Heart right ventricle (tissue), 16 donors: ENCODE measurements at regions of chr4 and their contacts with region 1.

Region 1: DNA sequence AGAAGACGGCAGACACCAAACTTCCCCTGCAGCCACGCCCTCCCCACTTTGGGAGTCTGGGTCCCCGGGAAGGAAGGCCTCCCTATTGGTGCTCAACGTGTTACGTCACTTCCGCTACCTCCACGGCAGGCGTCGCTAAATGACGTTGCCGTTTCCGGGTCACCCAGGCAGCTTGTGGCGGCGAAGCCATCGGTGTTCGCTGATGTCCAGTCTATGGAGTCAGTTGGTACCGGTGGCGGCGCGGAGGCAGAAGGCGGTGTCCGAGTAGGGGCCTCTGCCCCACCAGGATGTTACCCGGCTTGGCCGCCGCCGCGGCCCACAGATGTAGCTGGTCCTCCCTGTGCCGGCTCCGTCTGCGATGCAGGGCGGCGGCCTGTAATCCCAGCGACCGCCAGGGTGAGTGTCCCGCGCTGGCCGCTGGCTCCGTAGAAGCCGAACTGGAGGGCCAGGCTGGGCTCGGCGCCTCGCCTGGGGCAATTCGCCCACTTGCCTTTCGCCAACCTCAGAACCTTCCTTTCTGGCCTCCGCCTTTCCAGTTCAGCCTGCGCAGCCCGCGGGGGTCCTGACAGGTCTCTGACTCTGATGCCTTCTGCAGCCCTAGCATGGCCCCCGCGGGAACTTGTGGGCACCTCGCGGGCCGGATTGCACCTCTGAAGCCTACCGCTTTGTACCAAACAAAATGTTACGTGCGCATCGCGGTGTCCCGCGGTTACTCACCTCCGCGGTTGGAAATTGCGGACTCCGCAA is at the start of gene SLC30A9:
- DNase-seq: peak; percentile 91 to 97
- ATAC-seq: peak; percentile 98 to 100 (median 99)
- H3K4me3 ChIP-seq: peak within 1 kb of the TSS; percentile 72 to 97 (median 91)
- H3K27ac ChIP-seq: peak within 1 kb of the TSS; percentile 67 to 94 (median 89)
- H3K4me1 ChIP-seq: peaks cover 0 to 54% (median 34%) of the 10 kb centered on the region in 9 donors
- H3K27me3 ChIP-seq: no peaks in the 10 kb centered on the region
- CTCF ChIP-seq: peak; percentile 12 to 61 (median 41)
- total RNA-seq, gene SLC30A9: 73.8 to 95.0 (median 82.2) TPM

Region 2: DNA sequence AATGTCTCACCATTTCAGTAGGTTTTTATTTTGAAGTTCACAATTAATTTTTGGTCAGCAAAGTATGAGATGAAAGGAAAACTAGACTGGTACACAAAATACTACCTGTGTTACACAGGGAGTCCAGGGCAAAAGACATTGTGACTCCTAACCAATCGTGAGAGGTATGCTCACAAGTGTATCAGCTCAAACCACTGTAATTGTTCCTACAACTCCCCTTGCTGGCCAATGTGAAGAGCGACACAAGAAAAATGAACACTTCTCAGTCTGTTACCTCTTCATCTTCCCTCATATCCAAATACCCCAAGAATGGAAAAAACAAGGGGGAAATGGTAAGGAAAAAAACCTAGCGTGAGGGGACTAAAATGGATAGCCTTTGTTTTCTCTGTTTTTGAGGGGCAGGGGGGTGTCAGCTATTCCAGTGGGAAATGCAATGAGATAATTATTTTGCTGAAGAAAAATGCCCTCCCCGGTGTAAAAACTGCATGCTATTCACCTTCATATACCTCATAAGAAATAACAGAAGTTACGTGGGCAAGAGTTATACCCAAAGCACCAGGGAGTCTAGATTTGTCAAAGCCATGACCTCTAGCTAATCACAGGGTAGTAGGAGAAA is 1271.4 kb before region 1 on chr4:
- intact Hi-C with region 1: loop called in 1 of 10 experiments (anchors 5 kb)
- DNase-seq: no peak
- ATAC-seq: peak in 1 of 8 donors; percentile 49
- H3K4me3 ChIP-seq: no peak overlapping the region
- H3K27ac ChIP-seq: no peak overlapping the region
- H3K4me1 ChIP-seq: peaks cover 0 to 40% (median 0%) of the 10 kb centered on the region in 9 donors
- H3K27me3 ChIP-seq: peaks cover 0 to 37% (median 2%) of the 10 kb centered on the region in 7 donors
- CTCF ChIP-seq: peak in 5 of 9 donors; percentile 26 to 49 (median 33)

Region 3: DNA sequence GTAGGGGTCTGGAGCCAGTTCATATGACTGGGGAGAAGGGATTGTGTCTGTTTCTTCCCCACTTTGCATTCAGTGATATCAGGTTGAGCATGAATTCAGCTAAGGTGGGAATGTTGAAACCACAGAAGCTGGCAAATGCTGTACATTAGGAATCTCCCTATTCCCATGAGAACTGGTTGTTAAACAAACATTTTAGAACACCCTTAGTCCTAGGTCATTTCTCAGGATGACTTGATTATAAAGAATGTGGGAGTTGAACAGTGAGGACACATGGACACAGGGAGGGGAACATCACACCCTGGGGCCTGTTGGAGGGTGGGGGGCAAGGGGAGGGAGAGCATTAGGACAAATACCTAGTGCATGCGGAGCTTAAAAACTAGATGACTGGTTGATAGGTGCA is 515.1 kb before region 1 on chr4:
- intact Hi-C with region 1: no loop called
- DNase-seq: no peak
- ATAC-seq: peak in 2 of 8 donors; percentile 6 to 37
- H3K4me3 ChIP-seq: no peak overlapping the region
- H3K27ac ChIP-seq: no peak overlapping the region
- H3K4me1 ChIP-seq: peaks cover 0 to 46% (median 16%) of the 10 kb centered on the region in 9 donors
- H3K27me3 ChIP-seq: no peaks in the 10 kb centered on the region
- CTCF ChIP-seq: no peak

Region 4: DNA sequence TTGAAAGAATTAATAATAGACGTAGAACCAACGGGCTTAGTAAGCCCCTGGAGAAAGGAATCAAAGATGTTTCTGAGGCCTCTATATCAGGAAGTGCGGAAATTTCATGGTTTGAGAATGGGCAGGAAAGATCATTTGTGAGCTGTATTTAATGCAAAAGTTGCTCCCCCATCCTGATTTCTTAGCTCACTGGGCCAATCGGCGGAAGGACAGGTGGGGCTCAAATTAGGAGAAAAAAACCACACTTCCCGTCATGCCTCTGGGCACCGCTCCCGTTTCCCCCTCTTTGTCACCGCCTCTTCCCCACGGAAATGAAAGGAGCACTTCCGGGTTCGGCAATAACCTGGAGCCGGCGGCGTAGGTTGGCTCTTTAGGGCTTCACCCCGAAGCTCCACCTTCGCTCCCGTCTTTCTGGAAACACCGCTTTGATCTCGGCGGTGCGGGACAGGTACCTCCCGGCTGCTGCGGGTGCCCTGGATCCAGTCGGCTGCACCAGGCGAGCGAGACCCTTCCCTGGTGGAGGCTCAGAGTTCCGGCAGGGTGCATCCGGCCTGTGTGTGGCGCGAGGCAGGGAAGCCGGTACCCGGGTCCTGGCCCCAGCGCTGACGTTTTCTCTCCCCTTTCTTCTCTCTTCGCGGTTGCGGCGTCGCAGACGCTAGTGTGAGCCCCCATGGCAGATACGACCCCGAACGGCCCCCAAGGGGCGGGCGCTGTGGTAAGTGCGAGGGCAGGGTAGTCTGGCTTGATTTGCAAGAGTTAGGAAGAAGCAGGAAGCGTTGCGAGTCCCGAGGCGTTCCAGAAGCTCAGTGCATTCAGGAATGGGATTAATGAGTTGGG is 55.5 kb before region 1 on chr4 and contains the start of gene TMEM33:
- intact Hi-C with region 1: loop called in 3 of 10 experiments (anchors 5 to 10 kb)
- DNase-seq: peak; percentile 81 to 90
- ATAC-seq: peak; percentile 96 to 99 (median 98)
- H3K4me3 ChIP-seq: peak within 1 kb of the TSS; percentile 78 to 100 (median 91)
- H3K27ac ChIP-seq: peak within 1 kb of the TSS in 9 of 10 donors; percentile 76 to 93 (median 82)
- H3K4me1 ChIP-seq: peaks cover 7 to 50% (median 28%) of the 10 kb centered on the region in 9 donors
- H3K27me3 ChIP-seq: no peaks in the 10 kb centered on the region
- CTCF ChIP-seq: peak in 3 of 9 donors; percentile 20 to 38 (median 38)
- total RNA-seq, gene TMEM33: 22.8 to 31.2 (median 27.0) TPM

Region 5: DNA sequence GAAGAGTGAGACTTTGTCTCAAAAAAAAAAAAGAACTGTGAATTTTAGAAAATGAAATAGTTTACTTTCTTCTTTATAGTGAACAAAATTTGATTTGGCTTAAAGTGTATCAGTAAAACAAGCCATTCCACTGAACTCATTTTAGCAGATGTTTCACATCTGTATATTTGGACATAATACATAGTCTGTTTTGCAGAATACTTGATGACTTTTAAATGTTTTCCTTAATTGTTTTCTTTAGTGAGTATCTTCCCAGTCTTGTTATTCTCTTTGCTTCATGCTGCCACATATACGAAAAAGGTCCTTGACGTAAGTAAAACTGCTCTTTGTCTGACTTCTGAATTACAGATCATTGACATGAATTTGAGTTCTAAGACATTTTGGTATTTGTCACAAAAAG is 47.0 kb before region 1 on chr4:
- intact Hi-C with region 1: loop called in 3 of 10 experiments (anchors 5 to 10 kb)
- DNase-seq: no peak
- ATAC-seq: no peak
- H3K4me3 ChIP-seq: no peak overlapping the region
- H3K27ac ChIP-seq: no peak overlapping the region
- H3K4me1 ChIP-seq: peaks cover 0 to 14% (median 0%) of the 10 kb centered on the region in 9 donors
- H3K27me3 ChIP-seq: no peaks in the 10 kb centered on the region
- CTCF ChIP-seq: no peak